ENCODE measurements at regions of chr10 and their contacts with region 1.

Region 1: DNA sequence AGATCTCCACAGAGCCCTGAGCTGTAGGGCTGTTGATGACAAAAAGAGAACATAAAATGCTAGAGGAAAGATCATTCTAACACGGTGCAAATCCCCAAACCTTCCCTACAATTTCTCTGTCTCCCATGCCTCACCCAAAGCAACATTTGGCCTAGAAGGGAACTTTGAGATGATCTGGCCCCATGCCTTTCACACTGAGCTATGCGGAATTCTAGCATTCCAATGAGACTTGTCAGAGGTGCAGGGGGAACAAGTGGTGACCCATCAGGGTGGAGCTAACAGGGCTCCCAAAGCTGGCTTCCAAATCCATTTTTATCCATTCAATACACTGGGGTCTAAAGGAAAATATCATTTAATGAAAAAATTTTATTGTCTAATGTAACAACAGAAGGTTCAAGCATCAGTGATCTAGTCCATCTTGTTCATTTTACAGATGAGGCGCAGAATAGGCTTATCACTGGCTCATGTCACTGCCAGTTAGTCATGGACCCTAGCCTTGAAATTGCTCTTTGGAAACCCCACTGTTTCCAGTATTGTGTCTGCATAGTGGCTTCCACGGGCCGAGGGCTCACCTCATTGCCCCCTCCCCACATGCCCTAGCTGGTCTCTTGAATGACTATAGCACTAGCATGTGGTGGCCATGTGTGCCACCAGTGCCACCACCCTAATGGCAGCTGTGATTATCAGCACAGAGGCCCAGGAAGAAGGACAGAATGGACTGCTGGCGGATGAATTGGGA is 1001.0 kb downstream of the LRMDA start:
- DNase-seq: peak in 4 of 5 donors; percentile 26 to 63 (median 48)
- ATAC-seq: peak; percentile 22 to 49 (median 38)
- H3K4me3 ChIP-seq: no peak overlapping the region
- H3K27ac ChIP-seq: peak overlapping the region; percentile 68 to 91 (median 80)
- H3K4me1 ChIP-seq: peaks cover 0 to 82% (median 62%) of the 10 kb centered on the region in 12 donors
- H3K27me3 ChIP-seq: no peaks in the 10 kb centered on the region
- CTCF ChIP-seq: no peak
- POLR2A ChIP-seq: no peak

Region 2: GRCh38 chr10:76324283-76324682 is 108.2 kb before region 1 on chr10:
- intact Hi-C with region 1: loop called in 1 of 10 experiments (anchors 10 kb)
- DNase-seq: peak in 3 of 5 donors; percentile 51 to 60 (median 55)
- ATAC-seq: peak; percentile 55 to 90 (median 86)
- H3K4me3 ChIP-seq: no peak overlapping the region
- H3K27ac ChIP-seq: peak overlapping the region in 1 of 12 donors; percentile 20
- H3K4me1 ChIP-seq: peaks cover 0 to 13% (median 2%) of the 10 kb centered on the region in 12 donors
- H3K27me3 ChIP-seq: no peaks in the 10 kb centered on the region
- CTCF ChIP-seq: no peak
- POLR2A ChIP-seq: no peak

Region 3: GRCh38 chr10:76336213-76336963 is 96.1 kb before region 1 on chr10:
- intact Hi-C with region 1: loop called in 1 of 10 experiments (anchors 5 kb)
- DNase-seq: peak in 3 of 5 donors; percentile 30 to 51 (median 43)
- ATAC-seq: peak in 3 of 4 donors; percentile 70 to 84 (median 72)
- H3K4me3 ChIP-seq: no peak overlapping the region
- H3K27ac ChIP-seq: peak overlapping the region in 9 of 12 donors; percentile 8 to 79 (median 39)
- H3K4me1 ChIP-seq: peaks cover 0 to 23% (median 6%) of the 10 kb centered on the region in 12 donors
- H3K27me3 ChIP-seq: no peaks in the 10 kb centered on the region
- CTCF ChIP-seq: no peak
- POLR2A ChIP-seq: no peak

Region 4: GRCh38 chr10:76382381-76382851 is 50.0 kb before region 1 on chr10:
- intact Hi-C with region 1: no loop called
- DNase-seq: no peak
- ATAC-seq: no peak
- H3K4me3 ChIP-seq: no peak overlapping the region
- H3K27ac ChIP-seq: no peak overlapping the region
- H3K4me1 ChIP-seq: no peaks in the 10 kb centered on the region
- H3K27me3 ChIP-seq: no peaks in the 10 kb centered on the region
- CTCF ChIP-seq: no peak
- POLR2A ChIP-seq: no peak